ENCODE measurements at regions of chr17 and their contacts with region 1.

Region 1: GRCh38 chr17:78865682-78866390 is 25.2 kb upstream of the USP36 start:
- DNase-seq: peak; percentile 92
- H3K4me3 Mint-ChIP-seq: no peak overlapping the region
- H3K27ac Mint-ChIP-seq: no peak overlapping the region
- H3K4me1 Mint-ChIP-seq: peaks cover 2% of the 10 kb centered on the region
- H3K27me3 Mint-ChIP-seq: peaks cover 8% of the 10 kb centered on the region

Region 2: GRCh38 chr17:78925234-78925633 is 59.4 kb after region 1 on chr17 and contains the start of gene TIMP2:
- intact Hi-C with region 1: loop called (anchors 2 kb)
- DNase-seq: peak; percentile 90
- H3K4me3 Mint-ChIP-seq: peak within 1 kb of the TSS; percentile 70
- H3K27ac Mint-ChIP-seq: no peak within 1 kb of the TSS
- H3K4me1 Mint-ChIP-seq: peaks cover 8% of the 10 kb centered on the region
- H3K27me3 Mint-ChIP-seq: peaks cover 28% of the 10 kb centered on the region
- total RNA-seq, gene TIMP2: 0.54 and 0.64 TPM in 2 replicates

Region 3: GRCh38 chr17:78970834-78971773 is 105.3 kb after region 1 on chr17:
- intact Hi-C with region 1: loop called (anchors 1 kb)
- DNase-seq: peak; percentile 92
- H3K4me3 Mint-ChIP-seq: no peak overlapping the region
- H3K27ac Mint-ChIP-seq: peak overlapping the region; percentile 78
- H3K4me1 Mint-ChIP-seq: peaks cover 10% of the 10 kb centered on the region
- H3K27me3 Mint-ChIP-seq: no peaks in the 10 kb centered on the region